ENCODE measurements at regions of chr1 and their contacts with region 1.

Region 1: GRCh38 chr1:235415008-235415904 is 48.0 kb downstream of the TBCE start:
- DNase-seq: peak; percentile 24 to 75 (median 53)
- ATAC-seq: peak; percentile 69
- H3K4me3 ChIP-seq: no peak overlapping the region
- H3K4me3 Mint-ChIP-seq: no peak overlapping the region
- H3K27ac ChIP-seq: no peak overlapping the region
- H3K27ac Mint-ChIP-seq: no peak overlapping the region
- H3K4me1 ChIP-seq: no peaks in the 10 kb centered on the region
- H3K4me1 Mint-ChIP-seq: peaks cover 10% of the 10 kb centered on the region
- H3K27me3 ChIP-seq: no peaks in the 10 kb centered on the region
- H3K27me3 Mint-ChIP-seq: no peaks in the 10 kb centered on the region
- CTCF ChIP-seq: peak; percentile 77

Region 2: DNA sequence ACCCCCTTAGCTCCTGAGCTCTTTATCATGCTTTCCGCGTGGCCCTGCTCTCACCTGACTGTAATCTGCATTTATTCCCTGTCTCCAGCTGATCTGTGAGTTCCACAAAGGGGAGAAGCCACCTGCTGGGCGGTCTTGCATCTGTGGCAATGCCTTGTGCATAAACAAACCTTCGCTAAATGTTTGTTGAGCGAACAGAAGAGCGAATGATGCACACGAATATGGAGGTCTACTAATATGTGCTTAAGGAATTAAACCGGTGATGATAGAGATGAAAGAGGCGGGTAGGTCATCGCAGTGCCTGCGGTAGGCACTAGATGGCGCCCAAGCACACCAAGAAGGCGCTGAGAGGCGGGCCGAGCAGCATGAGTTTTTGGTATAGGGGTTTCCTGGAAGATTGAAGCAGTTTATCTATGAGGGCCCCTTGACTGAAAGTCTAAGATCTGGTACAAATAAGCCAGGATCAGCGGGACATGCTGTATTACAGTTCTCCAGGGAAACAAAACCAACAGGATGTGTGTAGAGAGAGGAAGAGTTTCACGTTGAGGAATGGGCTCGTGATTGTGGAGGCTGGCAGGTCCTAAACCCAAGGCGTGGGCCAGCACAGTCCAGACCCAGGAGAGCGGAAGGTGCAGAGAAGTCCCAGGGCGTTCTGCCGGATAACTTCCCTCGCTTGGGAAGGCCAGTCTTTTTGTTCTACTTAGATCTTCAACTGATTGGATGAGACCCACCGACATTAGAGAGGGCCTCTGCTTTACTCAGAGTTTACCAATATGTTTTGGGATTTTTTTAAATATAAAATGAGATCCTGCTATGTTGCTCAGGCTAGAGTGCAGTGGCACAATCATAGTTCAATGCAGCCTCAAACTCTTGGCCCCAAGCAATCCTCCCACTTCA is 321.3 kb before region 1 on chr1:
- CTCF ChIA-PET with region 1: interaction called, 7 read pairs
- POLR2A ChIA-PET with region 1: no interaction called
- intact Hi-C with region 1: loop called (anchors 1 to 2 kb)
- DNase-seq: peak; percentile 74 to 90 (median 82)
- ATAC-seq: peak; percentile 100
- H3K4me3 ChIP-seq: no peak overlapping the region
- H3K4me3 Mint-ChIP-seq: no peak overlapping the region
- H3K27ac ChIP-seq: no peak overlapping the region
- H3K27ac Mint-ChIP-seq: no peak overlapping the region
- H3K4me1 ChIP-seq: peaks cover 3% of the 10 kb centered on the region
- H3K4me1 Mint-ChIP-seq: peaks cover 7% of the 10 kb centered on the region
- H3K27me3 ChIP-seq: peaks cover 0 to 4% of the 10 kb centered on the region in 2 experiments
- H3K27me3 Mint-ChIP-seq: peaks cover 15% of the 10 kb centered on the region
- CTCF ChIP-seq: peak; percentile 91

Region 3: DNA sequence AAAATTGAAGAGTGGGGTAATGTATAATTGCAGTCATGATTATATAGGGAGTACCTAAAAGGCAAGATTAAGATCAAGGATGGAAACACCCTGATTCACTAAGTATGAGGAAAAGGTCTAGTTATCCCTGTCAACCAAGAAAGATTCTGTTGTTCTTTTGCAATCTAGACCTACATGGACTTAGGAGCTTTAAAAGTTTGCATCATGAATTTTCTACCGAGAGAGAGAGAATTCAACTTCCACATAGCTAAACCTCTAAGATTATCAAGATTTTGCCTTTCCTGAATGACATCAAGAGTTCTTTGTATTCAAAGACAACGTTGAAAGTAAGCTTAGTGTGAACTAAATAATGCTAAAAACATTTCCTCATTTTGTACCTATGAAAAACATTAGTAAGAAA is 175.4 kb before region 1 on chr1:
- CTCF ChIA-PET with region 1: interaction called, 29 read pairs
- POLR2A ChIA-PET with region 1: no interaction called
- intact Hi-C with region 1: no loop called
- DNase-seq: no peak
- ATAC-seq: no peak
- H3K4me3 ChIP-seq: no peak overlapping the region
- H3K4me3 Mint-ChIP-seq: no peak overlapping the region
- H3K27ac ChIP-seq: no peak overlapping the region
- H3K27ac Mint-ChIP-seq: no peak overlapping the region
- H3K4me1 ChIP-seq: peaks cover 3% of the 10 kb centered on the region
- H3K4me1 Mint-ChIP-seq: peaks cover 36% of the 10 kb centered on the region
- H3K27me3 ChIP-seq: no peaks in the 10 kb centered on the region
- H3K27me3 Mint-ChIP-seq: no peaks in the 10 kb centered on the region
- CTCF ChIP-seq: no peak

Region 4: DNA sequence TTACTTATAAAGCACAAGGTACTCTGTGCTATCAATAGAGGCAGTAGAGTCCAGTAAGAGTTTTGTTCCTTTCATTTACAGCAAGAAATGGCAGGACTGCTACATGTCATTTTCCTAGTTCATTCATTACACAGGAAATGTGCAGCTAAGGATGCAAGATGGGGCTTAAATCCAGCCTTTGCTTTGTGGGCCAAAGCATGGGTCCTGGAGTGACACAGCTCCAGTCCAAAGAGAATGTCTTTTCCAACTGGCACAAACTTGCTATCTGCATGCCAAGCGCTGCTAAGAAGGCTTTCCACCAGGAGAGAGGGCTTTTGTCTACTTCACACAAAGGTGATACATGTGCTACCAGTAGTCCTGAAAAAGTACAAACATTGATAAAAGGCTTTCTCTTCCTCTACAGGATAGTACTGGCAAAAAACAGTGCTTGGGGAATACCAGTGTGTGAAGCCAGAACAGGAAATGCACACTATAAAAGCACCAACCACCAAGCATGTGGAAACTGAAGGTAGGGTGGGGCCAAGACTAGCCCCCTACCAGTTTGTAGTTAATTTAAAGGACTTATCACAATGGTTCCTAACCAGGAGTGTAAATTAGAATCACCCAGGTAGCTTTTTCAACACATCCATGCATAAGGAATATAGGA is 156.0 kb before region 1 on chr1:
- CTCF ChIA-PET with region 1: interaction called, 26 read pairs
- POLR2A ChIA-PET with region 1: no interaction called
- intact Hi-C with region 1: no loop called
- DNase-seq: peak in 2 of 9 experiments; percentile 21 to 57
- ATAC-seq: peak; percentile 48
- H3K4me3 ChIP-seq: no peak overlapping the region
- H3K4me3 Mint-ChIP-seq: no peak overlapping the region
- H3K27ac ChIP-seq: peak overlapping the region in 1 of 2 experiments; percentile 51
- H3K27ac Mint-ChIP-seq: peak overlapping the region; percentile 42
- H3K4me1 ChIP-seq: peaks cover 47% of the 10 kb centered on the region
- H3K4me1 Mint-ChIP-seq: peaks cover 60% of the 10 kb centered on the region
- H3K27me3 ChIP-seq: no peaks in the 10 kb centered on the region
- H3K27me3 Mint-ChIP-seq: no peaks in the 10 kb centered on the region
- CTCF ChIP-seq: no peak

Region 5: GRCh38 chr1:235397733-235398132 is 17.5 kb before region 1 on chr1:
- CTCF ChIA-PET with region 1: interaction called, 12 read pairs
- POLR2A ChIA-PET with region 1: no interaction called
- intact Hi-C with region 1: no loop called
- DNase-seq: no peak
- ATAC-seq: no peak
- H3K4me3 ChIP-seq: no peak overlapping the region
- H3K4me3 Mint-ChIP-seq: no peak overlapping the region
- H3K27ac ChIP-seq: no peak overlapping the region
- H3K27ac Mint-ChIP-seq: no peak overlapping the region
- H3K4me1 ChIP-seq: no peaks in the 10 kb centered on the region
- H3K4me1 Mint-ChIP-seq: peaks cover 2% of the 10 kb centered on the region
- H3K27me3 ChIP-seq: no peaks in the 10 kb centered on the region
- H3K27me3 Mint-ChIP-seq: no peaks in the 10 kb centered on the region
- CTCF ChIP-seq: no peak

Region 6: GRCh38 chr1:235430991-235431390 is 15.7 kb after region 1 on chr1:
- CTCF ChIA-PET with region 1: interaction called, 16 read pairs
- POLR2A ChIA-PET with region 1: no interaction called
- intact Hi-C with region 1: no loop called
- DNase-seq: no peak
- ATAC-seq: no peak
- H3K4me3 ChIP-seq: no peak overlapping the region
- H3K4me3 Mint-ChIP-seq: no peak overlapping the region
- H3K27ac ChIP-seq: no peak overlapping the region
- H3K27ac Mint-ChIP-seq: no peak overlapping the region
- H3K4me1 ChIP-seq: no peaks in the 10 kb centered on the region
- H3K4me1 Mint-ChIP-seq: peaks cover 2% of the 10 kb centered on the region
- H3K27me3 ChIP-seq: no peaks in the 10 kb centered on the region
- H3K27me3 Mint-ChIP-seq: no peaks in the 10 kb centered on the region
- CTCF ChIP-seq: no peak

Region 7: DNA sequence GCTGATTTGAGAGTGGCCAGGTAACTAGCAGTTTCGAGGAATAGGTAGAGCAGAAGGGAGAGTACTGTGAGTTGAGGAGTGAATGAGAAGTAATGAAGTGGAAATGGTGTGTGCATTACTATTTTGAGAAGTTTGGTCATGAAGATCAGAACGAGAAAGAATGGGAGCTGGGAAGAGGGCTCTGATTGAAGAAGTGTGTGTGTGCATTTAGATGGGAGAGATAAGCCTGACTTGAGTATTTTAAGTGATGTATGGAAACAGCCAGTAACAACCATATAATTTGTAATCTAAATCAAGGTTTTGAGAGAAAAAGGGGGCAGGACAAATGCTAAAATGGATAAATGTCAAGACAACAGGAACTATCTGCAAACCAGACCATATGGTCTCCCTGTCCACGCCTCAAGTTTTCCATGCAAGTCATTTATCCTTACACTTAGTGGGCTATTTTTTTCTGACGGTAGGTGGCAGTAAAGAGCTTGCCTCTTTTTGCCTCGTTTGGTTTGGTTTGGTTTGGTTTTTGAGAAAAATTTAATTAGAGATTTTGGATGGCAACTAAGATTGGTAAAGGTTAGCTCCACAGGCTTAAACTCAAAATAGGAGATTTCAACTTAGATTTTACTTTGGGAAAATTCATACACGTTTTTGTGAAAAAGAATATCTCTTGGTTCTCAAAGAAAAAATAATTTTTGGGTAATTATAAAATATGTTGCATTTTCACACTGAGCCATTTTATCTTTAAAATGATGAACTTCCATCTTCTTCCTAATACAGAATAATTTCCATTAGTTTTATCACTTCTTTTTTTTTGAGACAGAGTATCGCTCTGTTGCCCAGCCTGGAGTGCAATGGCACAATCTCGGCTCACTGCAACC is 98.5 kb after region 1 on chr1:
- CTCF ChIA-PET with region 1: no interaction called
- POLR2A ChIA-PET with region 1: no interaction called
- intact Hi-C with region 1: no loop called
- DNase-seq: peak in 5 of 9 experiments; percentile 14 to 77 (median 54)
- ATAC-seq: peak; percentile 55
- H3K4me3 ChIP-seq: no peak overlapping the region
- H3K4me3 Mint-ChIP-seq: no peak overlapping the region
- H3K27ac ChIP-seq: no peak overlapping the region
- H3K27ac Mint-ChIP-seq: no peak overlapping the region
- H3K4me1 ChIP-seq: no peaks in the 10 kb centered on the region
- H3K4me1 Mint-ChIP-seq: no peaks in the 10 kb centered on the region
- H3K27me3 ChIP-seq: no peaks in the 10 kb centered on the region
- H3K27me3 Mint-ChIP-seq: peaks cover 13% of the 10 kb centered on the region
- CTCF ChIP-seq: peak; percentile 94

Measured in CD8-positive, alpha-beta T cell (primary cell).